Esophagus muscularis mucosa (tissue), 4 donors: ENCODE measurements at regions of chr16 and their contacts with region 1.

Region 1: DNA sequence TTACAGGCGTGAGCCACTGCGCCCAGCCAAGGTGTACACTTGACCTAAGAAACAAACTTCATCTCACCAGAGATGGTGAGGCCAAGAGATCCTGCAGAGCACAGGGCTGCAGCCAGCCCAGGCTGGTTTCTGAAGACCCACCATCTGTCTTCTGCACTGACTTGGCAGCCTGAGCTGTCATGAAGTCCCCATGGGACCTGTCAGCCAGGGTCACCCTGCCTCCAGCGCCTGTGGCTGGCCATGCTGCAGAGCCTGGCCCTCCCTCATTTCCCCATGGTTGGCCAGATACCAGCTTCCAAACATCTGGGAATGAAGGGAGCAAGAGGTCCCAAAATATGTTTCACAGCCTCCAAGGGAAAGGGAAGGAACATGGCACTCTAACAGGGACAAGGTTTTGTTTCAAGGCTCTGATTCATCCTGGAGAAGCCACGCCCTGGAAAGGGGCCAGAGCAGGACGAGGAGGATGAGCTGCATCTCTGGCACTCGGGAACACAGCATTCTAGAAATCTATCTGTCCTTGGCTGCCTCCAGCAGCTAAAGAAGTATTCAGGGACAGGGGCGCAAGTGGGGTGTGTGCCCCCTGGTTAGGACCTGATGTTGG is 45.3 kb downstream of the DDX19A start:
- DNase-seq: no peak
- H3K4me3 ChIP-seq: no peak overlapping the region
- H3K27ac ChIP-seq: peak overlapping the region in 1 of 4 donors; percentile 30
- H3K4me1 ChIP-seq: peaks cover 11 to 17% (median 11%) of the 10 kb centered on the region in 4 donors
- H3K27me3 ChIP-seq: no peaks in the 10 kb centered on the region
- CTCF ChIP-seq: no peak
- EP300 ChIP-seq: no peak
- POLR2A ChIP-seq: no peak

Region 2: GRCh38 chr16:70324998-70325747 is 66.8 kb before region 1 on chr16:
- intact Hi-C with region 1: no loop called
- DNase-seq: no peak
- H3K4me3 ChIP-seq: no peak overlapping the region
- H3K27ac ChIP-seq: no peak overlapping the region
- H3K4me1 ChIP-seq: no peaks in the 10 kb centered on the region
- H3K27me3 ChIP-seq: no peaks in the 10 kb centered on the region
- CTCF ChIP-seq: no peak
- EP300 ChIP-seq: no peak
- POLR2A ChIP-seq: no peak

Region 3: DNA sequence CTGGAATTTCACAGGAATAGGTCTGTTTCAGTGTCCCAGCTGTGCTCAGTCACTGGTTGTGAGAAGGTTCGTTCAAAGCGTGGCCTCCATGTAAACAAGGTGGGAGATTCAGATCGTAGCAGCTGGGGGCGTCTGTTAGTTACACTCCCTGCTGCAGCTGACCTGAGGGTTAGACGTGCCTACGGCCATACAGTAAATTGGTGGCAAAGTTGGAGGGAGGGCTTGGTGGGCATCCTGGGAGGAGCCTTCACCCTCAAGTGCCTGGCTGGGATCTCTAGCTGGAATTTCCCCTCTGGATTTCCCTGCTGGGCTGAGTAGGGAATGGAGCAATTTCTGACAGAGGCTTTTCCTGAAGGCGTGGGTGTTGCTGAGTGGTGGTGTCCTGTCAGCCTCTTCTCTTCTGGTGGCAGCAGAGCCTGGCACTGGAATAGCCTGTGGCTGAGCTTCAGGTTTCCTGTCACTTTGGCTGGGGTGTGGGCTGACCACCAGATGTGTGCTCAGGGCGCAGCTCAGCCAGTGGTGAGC is 68.8 kb after region 1 on chr16:
- intact Hi-C with region 1: loop called (anchors 5 kb)
- DNase-seq: no peak
- H3K4me3 ChIP-seq: no peak overlapping the region
- H3K27ac ChIP-seq: no peak overlapping the region
- H3K4me1 ChIP-seq: peaks cover 2 to 17% (median 15%) of the 10 kb centered on the region in 4 donors
- H3K27me3 ChIP-seq: no peaks in the 10 kb centered on the region
- CTCF ChIP-seq: no peak
- EP300 ChIP-seq: no peak
- POLR2A ChIP-seq: no peak